Activated naive CD4-positive, alpha-beta T cell treated with anti-CD3 and anti-CD28 coated beads for 36 hours (primary cell): ENCODE measurements at regions of chr17 and their contacts with region 1.

Region 1: GRCh38 chr17:47895856-47896671 is at the start of gene SP2:
- DNase-seq: peak; percentile 100
- H3K4me3 Mint-ChIP-seq: peak within 1 kb of the TSS; percentile 93
- H3K27ac Mint-ChIP-seq: peak within 1 kb of the TSS; percentile 95
- H3K4me1 Mint-ChIP-seq: peaks cover 41% of the 10 kb centered on the region
- H3K27me3 Mint-ChIP-seq: no peaks in the 10 kb centered on the region
- total RNA-seq, gene SP2: 17.4 to 19.5 TPM

Region 2: DNA sequence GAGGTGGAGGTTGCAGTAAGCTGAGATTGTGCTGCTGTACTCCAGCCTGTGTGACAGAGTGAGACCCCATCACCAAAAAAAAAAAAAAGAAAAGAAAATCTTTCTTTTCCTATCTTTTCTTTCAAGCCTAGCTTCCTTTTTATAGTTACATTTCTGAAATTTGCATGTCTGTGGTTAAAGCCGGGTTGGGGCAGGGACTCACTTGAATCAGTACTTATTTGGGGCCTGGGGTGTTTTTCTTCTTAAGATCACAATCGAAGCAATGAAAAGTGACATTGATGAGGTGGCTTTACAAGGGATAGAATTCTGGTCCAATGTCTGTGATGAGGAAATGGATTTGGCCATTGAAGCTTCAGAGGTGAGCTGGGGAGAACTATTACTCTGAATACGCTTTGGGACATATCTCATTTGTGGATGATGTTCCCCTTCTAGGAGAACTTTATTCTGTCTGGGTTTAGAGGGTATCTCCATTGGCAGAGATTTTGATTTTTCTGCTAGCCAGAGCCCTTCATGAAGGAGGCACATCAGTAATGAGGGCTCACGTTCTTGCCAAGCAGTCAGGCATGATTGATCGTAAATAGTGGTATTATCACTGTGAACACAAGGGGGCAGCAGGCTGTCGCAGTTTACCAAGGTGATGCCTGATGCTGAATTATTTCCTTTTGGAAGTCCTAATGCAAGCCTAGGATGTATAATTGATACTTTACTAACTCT is 232.0 kb before region 1 on chr17:
- CTCF ChIA-PET with region 1: no interaction called
- intact Hi-C with region 1: no loop called
- DNase-seq: peak; percentile 80
- H3K4me3 Mint-ChIP-seq: no peak overlapping the region
- H3K27ac Mint-ChIP-seq: peak overlapping the region; percentile 87
- H3K4me1 Mint-ChIP-seq: peaks cover 41% of the 10 kb centered on the region
- H3K27me3 Mint-ChIP-seq: no peaks in the 10 kb centered on the region

Region 3: GRCh38 chr17:47831003-47831933 is 64.8 kb before region 1 on chr17 and contains the starts of genes LRRC46 and MRPL10:
- CTCF ChIA-PET with region 1: interaction called, 6 read pairs
- intact Hi-C with region 1: loop called (anchors 1 kb)
- DNase-seq: peak; percentile 93
- H3K4me3 Mint-ChIP-seq: peak within 1 kb of the TSS; percentile 89
- H3K27ac Mint-ChIP-seq: peak within 1 kb of the TSS; percentile 78
- H3K4me1 Mint-ChIP-seq: peaks cover 60% of the 10 kb centered on the region
- H3K27me3 Mint-ChIP-seq: no peaks in the 10 kb centered on the region
- total RNA-seq, gene LRRC46: 0.31 to 0.52 TPM
- total RNA-seq, gene MRPL10: 66.7 to 70.0 TPM

Region 4: DNA sequence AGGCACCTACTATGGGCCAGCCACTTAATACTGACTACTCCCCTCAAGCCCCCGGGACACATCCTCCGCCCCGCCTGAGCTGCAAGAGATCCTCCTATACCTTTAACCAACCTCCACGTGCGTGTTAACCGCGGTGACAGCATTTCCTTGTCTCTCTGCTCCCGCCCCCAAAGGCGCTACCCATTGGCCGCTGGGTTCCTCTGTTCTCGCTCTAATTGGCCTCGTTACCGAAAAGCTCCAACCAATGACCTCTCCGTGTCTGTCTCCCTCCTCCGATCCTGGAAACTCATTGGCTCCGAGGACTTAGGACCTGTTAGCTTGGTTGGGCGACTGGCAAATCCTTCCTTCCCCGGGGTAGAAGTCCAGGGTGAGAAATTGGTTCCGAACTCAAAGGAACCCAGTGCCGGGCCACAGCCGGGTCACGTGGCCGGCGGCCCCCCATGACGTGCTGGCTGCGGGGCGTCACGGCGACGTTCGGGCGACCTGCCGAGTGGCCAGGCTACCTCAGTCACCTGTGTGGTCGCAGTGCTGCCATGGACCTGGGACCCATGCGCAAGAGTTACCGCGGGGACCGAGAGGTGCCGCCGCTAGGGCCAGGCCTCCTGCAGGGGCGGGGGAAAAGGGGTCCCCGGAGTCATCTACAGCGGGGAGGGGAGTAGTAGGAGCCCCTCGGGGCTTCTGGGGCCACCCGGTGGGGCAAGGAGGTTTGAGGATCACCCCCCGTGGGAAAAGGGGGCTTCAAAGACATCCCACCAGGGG is 45.4 kb after region 1 on chr17 and contains the start of gene PNPO:
- CTCF ChIA-PET with region 1: interaction called, 7 read pairs
- intact Hi-C with region 1: loop called (anchors 1 kb)
- DNase-seq: peak; percentile 98
- H3K4me3 Mint-ChIP-seq: peak within 1 kb of the TSS; percentile 85
- H3K27ac Mint-ChIP-seq: peak within 1 kb of the TSS; percentile 80
- H3K4me1 Mint-ChIP-seq: peaks cover 62% of the 10 kb centered on the region
- H3K27me3 Mint-ChIP-seq: no peaks in the 10 kb centered on the region
- total RNA-seq, gene PNPO: 35.5 to 37.0 TPM

Region 5: DNA sequence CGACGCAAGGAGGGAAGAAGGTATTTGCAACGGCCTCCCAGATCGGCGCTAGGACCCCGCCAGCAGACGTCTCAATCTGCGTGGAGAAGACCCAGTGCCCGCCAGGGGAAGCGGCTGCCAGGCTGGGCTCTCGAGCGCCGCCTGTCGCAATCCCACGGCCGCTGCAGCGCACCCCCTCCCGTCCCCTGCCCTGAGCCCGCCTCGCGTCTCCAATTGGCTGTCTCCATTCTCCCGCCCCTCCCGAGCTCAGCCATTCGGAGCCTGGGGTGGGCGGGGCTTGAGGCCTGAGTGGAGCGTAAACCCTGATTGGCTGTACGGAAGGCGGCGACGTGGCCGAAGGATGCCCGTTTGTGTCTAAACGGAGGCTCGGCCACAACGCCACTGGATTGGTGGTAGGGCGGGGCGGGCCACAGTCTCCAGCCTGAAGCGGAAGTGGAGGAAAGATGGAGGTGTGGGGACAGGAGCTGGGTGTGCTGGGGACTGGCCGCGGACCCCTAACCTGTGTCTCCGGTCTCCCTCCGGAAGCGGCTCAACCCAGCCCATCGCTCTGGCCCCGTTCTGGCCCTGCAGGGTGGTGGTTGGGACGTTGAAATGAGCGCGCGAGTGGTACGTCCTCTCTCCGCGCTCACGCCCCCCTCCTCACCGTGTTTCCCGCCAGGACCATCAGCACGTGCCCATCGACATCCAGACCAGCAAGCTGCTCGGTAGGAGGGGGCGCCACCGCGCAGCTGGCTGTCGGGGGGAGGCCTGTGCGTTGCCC is 74.8 kb after region 1 on chr17 and contains the start of gene CDK5RAP3:
- CTCF ChIA-PET with region 1: interaction called, 16 read pairs
- intact Hi-C with region 1: loop called (anchors 1 kb)
- DNase-seq: peak; percentile 100
- H3K4me3 Mint-ChIP-seq: peak within 1 kb of the TSS; percentile 95
- H3K27ac Mint-ChIP-seq: peak within 1 kb of the TSS; percentile 80
- H3K4me1 Mint-ChIP-seq: peaks cover 24% of the 10 kb centered on the region
- H3K27me3 Mint-ChIP-seq: no peaks in the 10 kb centered on the region
- total RNA-seq, gene CDK5RAP3: 174 to 175 TPM

Region 6: DNA sequence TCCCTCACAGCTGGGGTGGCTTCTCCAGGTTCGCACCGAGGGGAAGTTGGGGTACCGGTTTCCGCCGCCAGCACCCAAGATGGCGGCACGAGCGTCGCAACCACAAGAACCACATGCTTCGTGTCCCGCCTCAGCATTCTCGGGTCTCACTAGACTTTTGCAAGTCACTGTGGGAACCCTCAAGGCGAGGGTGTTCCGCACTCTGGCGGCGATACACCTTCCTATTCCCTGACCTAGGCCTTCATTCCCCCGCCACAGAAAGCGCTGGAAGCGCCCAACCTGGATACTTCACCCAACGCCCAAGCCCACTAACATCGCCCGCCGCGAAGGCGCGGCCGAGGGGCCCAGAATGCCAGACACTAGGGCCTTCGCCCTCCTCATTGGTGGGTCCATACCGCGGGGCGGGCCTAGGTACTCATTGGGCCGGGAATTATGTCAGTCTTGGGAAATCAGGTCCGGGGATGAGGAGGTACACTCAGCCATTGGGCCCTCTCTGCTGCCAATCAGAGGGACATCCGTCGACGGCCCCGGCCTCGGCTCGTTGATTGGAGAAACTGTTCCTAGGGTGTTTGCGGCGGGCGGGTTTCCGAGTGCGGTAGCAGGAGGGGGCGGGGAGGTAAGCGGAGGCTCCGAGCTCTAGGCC is 151.8 kb after region 1 on chr17 and contains the start of gene NFE2L1:
- CTCF ChIA-PET with region 1: no interaction called
- intact Hi-C with region 1: loop called (anchors 1 kb)
- DNase-seq: peak; percentile 100
- H3K4me3 Mint-ChIP-seq: peak within 1 kb of the TSS; percentile 99
- H3K27ac Mint-ChIP-seq: peak within 1 kb of the TSS; percentile 98
- H3K4me1 Mint-ChIP-seq: peaks cover 51% of the 10 kb centered on the region
- H3K27me3 Mint-ChIP-seq: no peaks in the 10 kb centered on the region
- total RNA-seq, gene NFE2L1: 95.2 to 102 TPM